ENCODE measurements at regions of chr11 and their contacts with region 1.

Region 1: DNA sequence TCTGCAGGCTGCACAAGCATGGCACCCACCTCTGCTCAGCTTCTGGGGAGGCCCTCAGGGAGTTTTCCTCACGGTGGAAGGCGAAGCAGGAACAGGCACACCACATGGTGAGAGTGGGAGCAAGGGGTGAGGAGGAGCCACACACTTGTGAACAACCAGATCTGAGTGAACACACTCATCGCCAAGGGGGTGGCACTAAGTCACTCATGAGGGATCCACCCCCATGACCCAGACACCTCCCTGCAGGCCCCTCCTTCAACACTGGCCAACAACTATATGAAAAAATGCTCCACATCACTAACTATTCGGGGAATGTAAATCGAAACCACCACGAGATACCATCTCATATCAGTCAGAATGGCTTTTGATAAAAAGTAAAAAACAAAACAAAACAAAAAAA is 722 bp upstream of the KRTAP5-2 start:
- H3K4me3 ChIP-seq: no peak overlapping the region
- H3K27ac ChIP-seq: no peak overlapping the region
- H3K4me1 ChIP-seq: no peaks in the 10 kb centered on the region
- CTCF ChIP-seq: no peak

Region 2: GRCh38 chr11:1472178-1473002 is 126.4 kb before region 1 on chr11:
- CTCF ChIA-PET with region 1: no interaction called
- POLR2A ChIA-PET with region 1: no interaction called
- H3K4me3 ChIP-seq: no peak overlapping the region
- H3K27ac ChIP-seq: no peak overlapping the region
- H3K4me1 ChIP-seq: no peaks in the 10 kb centered on the region
- CTCF ChIP-seq: no peak

Region 3: DNA sequence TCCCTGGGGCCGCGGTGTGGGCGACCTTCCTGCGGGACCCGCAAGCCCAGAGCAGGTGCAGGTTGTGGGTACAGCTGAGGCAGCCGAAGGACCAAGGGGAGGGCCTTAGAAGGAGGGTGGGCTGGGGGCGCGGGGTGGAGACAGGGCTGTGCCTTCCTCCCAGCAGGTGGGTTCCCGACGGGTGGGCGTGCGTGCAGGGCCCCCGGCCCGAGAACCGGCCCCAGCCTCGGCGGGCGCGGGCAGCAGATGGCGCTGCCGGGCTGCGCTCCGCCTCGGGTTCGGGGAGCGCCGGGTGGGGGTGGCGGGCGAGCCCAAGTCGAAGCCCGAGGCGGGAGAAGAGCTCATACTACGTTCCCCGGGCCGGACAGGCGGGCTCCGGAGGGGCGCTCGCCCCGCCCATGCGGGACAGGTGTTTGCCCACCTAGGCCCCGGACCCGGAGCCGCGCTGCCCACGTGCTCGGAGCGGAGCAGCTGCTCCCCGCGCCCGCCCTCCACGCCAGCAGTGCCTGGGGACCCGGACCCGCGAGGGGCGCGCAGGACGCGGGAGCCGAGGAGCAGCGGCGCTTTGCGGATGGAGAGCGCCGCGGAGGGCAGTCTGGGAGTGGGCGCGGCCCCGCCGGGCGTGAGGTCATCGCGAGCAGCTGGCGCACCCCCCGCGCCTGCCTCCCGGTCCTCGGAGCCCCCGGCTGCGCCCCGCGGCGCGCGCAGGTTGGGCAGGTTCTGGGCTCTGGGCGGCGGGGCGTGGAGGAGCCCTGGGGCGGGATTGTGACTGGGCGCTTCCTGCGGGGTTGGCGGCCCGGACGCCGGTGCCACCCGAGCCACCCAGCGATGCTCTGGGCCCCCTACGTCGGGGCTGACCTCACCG is 52.0 kb before region 1 on chr11:
- CTCF ChIA-PET with region 1: interaction called, 10 read pairs
- POLR2A ChIA-PET with region 1: no interaction called
- H3K4me3 ChIP-seq: peak overlapping the region; percentile 36
- H3K27ac ChIP-seq: no peak overlapping the region
- H3K4me1 ChIP-seq: peaks cover 3% of the 10 kb centered on the region; the same call in 1 of the 2 replicates
- CTCF ChIP-seq: peak; percentile 46; the same call in 1 of the 2 replicates

Region 4: DNA sequence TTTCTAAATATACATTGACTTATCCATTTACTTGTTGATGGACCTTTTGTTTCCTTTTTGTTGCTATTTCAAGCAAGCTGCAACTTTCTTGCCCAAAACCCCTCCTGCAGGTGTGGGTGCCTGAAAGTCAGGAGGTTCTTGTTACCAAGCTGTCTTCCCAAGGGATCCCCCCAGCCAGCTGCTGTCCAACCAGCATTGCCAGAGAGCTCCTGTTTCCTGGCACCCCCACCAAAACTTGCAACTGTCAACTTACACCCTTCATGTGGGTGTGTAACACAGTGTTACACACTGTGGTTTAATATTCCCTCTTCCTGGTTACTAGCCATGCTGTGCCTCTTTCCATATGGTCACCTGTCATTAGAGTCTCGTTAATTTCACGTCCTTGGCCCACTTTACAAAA is 12.1 kb before region 1 on chr11:
- CTCF ChIA-PET with region 1: interaction called, 12 read pairs
- POLR2A ChIA-PET with region 1: no interaction called
- H3K4me3 ChIP-seq: no peak overlapping the region
- H3K27ac ChIP-seq: no peak overlapping the region
- H3K4me1 ChIP-seq: no peaks in the 10 kb centered on the region
- CTCF ChIP-seq: no peak

Region 5: GRCh38 chr11:1628506-1629325 is 29.9 kb after region 1 on chr11:
- CTCF ChIA-PET with region 1: interaction called, 12 read pairs
- POLR2A ChIA-PET with region 1: no interaction called
- H3K4me3 ChIP-seq: no peak overlapping the region
- H3K27ac ChIP-seq: no peak overlapping the region
- H3K4me1 ChIP-seq: no peaks in the 10 kb centered on the region
- CTCF ChIP-seq: peak; percentile 76

Measured in HEK293 (cell line).